ENCODE measurements at regions of chr5 and their contacts with region 1.

Region 1: GRCh38 chr5:150486402-150487198 is 21.3 kb upstream of the NDST1 start:
- DNase-seq: peak; percentile 81
- ATAC-seq: peak; percentile 33
- H3K4me3 ChIP-seq: peak overlapping the region; percentile 95
- H3K27ac ChIP-seq: peak overlapping the region; percentile 62
- H3K4me1 ChIP-seq: peaks cover 42% of the 10 kb centered on the region
- H3K27me3 ChIP-seq: no peaks in the 10 kb centered on the region
- CTCF ChIP-seq: no peak

Region 2: GRCh38 chr5:150428106-150428876 is 58.3 kb before region 1 on chr5:
- CTCF ChIA-PET with region 1: no interaction called
- POLR2A ChIA-PET with region 1: no interaction called
- intact Hi-C with region 1: no loop called
- DNase-seq: no peak
- ATAC-seq: no peak
- H3K4me3 ChIP-seq: no peak overlapping the region
- H3K27ac ChIP-seq: no peak overlapping the region
- H3K4me1 ChIP-seq: no peaks in the 10 kb centered on the region
- H3K27me3 ChIP-seq: no peaks in the 10 kb centered on the region
- CTCF ChIP-seq: no peak

Region 3: DNA sequence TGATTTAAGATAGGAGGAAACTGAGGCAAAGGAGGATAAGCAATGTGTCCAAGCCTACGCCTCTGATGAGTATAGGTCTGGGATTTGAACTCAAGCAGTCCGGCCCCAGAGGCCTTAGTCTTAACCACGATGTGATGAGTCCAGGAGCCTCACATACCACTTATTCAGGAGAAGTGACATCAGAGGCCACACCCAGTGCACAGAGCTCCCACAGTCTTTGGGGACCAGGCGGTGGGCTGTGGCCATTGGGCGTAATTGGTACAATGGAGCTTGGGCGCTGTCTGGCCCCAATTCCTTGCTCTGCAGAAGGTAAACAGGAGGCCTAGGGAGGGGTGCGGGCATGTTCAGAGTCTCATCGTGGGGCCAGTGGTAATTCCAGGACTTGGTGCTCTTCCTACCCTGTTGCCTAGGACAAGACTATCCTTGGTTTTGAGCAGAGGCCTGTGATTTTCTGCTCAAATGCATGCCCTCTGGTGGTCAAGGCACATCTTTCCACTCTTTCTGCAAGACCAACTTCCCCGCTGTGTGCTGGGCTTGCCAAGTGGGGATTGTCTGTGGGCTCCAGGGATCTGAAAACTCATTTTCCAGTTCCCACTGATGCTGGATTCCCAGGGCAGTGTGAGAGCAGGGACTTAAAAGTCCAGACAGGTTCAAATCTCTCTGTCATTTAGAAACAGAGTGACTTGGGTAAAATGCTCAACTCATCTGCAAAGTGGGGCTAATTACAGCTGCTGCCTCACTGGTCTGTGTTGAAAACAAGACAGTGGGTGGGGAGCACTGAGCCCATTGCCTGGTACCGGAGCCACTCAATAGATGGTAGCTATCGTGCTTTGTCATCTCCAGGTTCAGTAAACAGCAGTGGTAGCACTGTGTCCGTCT is 37.1 kb after region 1 on chr5:
- CTCF ChIA-PET with region 1: no interaction called
- POLR2A ChIA-PET with region 1: no interaction called
- intact Hi-C with region 1: loop called (anchors 2 kb)
- DNase-seq: peak; percentile 69
- ATAC-seq: peak; percentile 93
- H3K4me3 ChIP-seq: no peak overlapping the region
- H3K27ac ChIP-seq: no peak overlapping the region
- H3K4me1 ChIP-seq: no peaks in the 10 kb centered on the region
- H3K27me3 ChIP-seq: no peaks in the 10 kb centered on the region
- CTCF ChIP-seq: peak; percentile 81